Heart right ventricle (tissue), 16 donors: ENCODE measurements at regions of chr11 and their contacts with region 1.

Region 1: DNA sequence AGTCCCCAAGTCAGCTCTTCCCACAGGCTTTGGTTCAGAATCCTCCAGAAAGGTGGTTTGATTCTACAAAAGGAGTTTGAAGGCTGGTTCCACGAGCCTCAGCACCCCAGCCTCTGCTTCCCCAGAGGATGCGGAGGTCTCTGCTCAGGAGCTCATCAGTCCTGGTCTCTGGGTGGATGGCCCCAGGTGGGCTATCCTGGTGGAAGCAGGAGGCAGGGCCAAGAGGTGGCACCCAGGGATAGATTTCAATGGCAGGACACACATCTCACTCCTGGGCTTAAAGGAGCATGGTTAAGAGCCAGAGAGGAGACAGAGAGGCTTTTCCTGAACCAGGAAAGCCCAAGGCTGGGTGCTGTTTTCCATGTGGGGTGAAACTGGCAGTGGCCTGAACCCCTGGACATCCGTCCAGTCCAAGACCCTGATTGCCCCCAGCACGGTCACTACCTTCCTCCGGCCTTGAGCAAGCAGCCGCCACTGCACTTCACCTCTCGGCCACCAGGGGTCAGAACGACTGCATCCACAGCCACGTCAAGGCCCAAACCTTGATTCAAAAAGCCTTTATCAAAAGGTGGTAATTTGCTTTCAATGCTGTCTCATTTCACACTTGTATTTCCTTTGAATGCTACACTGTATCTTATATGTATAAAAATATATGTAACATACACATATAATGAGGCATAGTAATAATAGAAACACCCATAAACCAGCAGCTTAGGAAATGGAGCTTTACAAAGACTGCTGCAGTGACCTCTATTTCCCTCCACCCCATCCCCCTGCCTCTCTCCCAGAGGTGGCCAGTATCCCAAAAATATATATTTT is 19.3 kb upstream of the FXYD2 start:
- DNase-seq: peak; percentile 84 to 88
- ATAC-seq: peak; percentile 59 to 84 (median 76)
- H3K4me3 ChIP-seq: no peak overlapping the region
- H3K27ac ChIP-seq: peak overlapping the region in 3 of 10 donors; percentile 21 to 44 (median 30)
- H3K4me1 ChIP-seq: peaks cover 0 to 36% (median 24%) of the 10 kb centered on the region in 9 donors
- H3K27me3 ChIP-seq: no peaks in the 10 kb centered on the region
- CTCF ChIP-seq: peak; percentile 97 to 100 (median 99)

Region 2: GRCh38 chr11:117900121-117900648 is 56.3 kb after region 1 on chr11:
- intact Hi-C with region 1: loop called (anchors 1 to 10 kb)
- DNase-seq: no peak
- ATAC-seq: peak in 4 of 8 donors; percentile 21 to 56 (median 40)
- H3K4me3 ChIP-seq: no peak overlapping the region
- H3K27ac ChIP-seq: peak overlapping the region in 2 of 10 donors; percentile 41 to 65
- H3K4me1 ChIP-seq: peaks cover 0 to 19% (median 0%) of the 10 kb centered on the region in 9 donors
- H3K27me3 ChIP-seq: no peaks in the 10 kb centered on the region
- CTCF ChIP-seq: no peak

Region 3: GRCh38 chr11:117907251-117907981 is 63.5 kb after region 1 on chr11:
- intact Hi-C with region 1: loop called (anchors 1 to 10 kb)
- DNase-seq: peak; percentile 82 to 85
- ATAC-seq: peak; percentile 85 to 97 (median 92)
- H3K4me3 ChIP-seq: no peak overlapping the region
- H3K27ac ChIP-seq: no peak overlapping the region
- H3K4me1 ChIP-seq: peaks cover 0 to 14% (median 5%) of the 10 kb centered on the region in 9 donors
- H3K27me3 ChIP-seq: peaks cover 0 to 8% (median 0%) of the 10 kb centered on the region in 7 donors
- CTCF ChIP-seq: no peak